ENCODE measurements at regions of chr17 and their contacts with region 1.

Region 1: DNA sequence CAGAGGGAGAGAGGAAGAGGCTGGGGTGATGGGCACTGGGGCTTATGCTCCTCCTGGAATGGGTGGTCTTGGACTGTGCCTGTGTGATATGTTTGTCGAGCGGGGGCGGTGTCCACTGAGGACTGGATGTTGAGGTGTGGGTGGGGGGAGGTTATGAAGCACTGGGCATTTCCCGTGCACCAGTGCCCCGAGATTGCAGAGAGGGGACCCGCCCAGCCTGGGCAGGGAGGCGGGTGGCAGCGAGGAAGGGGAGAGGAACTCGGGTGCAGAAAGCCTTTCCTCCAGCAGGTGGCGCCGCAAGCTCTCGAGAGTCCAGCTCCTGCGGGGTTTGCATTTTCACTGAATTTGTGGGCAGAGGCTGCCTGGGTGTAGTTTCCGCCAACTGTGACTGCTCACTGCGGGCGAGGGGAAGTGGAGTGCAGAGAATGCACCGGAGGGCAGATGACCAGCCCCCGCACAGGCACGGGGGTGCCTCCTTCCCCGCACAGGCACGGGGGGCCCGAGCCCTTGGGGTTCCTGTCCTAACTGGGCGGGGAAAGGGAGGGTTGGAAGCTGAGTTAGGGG is 190.6 kb downstream of the SEC14L1 start:
- DNase-seq: peak; percentile 92
- H3K4me3 ChIP-seq: peak overlapping the region; percentile 52
- H3K27ac ChIP-seq: peak overlapping the region; percentile 68
- H3K4me1 ChIP-seq: peaks cover 18% of the 10 kb centered on the region
- H3K27me3 ChIP-seq: no peaks in the 10 kb centered on the region
- CTCF ChIP-seq: peak; percentile 98

Region 2: GRCh38 chr17:77235370-77235941 is 95.9 kb before region 1 on chr17:
- intact Hi-C with region 1: no loop called
- DNase-seq: peak; percentile 45
- H3K4me3 ChIP-seq: peak overlapping the region; percentile 49
- H3K27ac ChIP-seq: peak overlapping the region; percentile 76
- H3K4me1 ChIP-seq: peaks cover 26% of the 10 kb centered on the region
- H3K27me3 ChIP-seq: no peaks in the 10 kb centered on the region
- CTCF ChIP-seq: no peak

Region 3: DNA sequence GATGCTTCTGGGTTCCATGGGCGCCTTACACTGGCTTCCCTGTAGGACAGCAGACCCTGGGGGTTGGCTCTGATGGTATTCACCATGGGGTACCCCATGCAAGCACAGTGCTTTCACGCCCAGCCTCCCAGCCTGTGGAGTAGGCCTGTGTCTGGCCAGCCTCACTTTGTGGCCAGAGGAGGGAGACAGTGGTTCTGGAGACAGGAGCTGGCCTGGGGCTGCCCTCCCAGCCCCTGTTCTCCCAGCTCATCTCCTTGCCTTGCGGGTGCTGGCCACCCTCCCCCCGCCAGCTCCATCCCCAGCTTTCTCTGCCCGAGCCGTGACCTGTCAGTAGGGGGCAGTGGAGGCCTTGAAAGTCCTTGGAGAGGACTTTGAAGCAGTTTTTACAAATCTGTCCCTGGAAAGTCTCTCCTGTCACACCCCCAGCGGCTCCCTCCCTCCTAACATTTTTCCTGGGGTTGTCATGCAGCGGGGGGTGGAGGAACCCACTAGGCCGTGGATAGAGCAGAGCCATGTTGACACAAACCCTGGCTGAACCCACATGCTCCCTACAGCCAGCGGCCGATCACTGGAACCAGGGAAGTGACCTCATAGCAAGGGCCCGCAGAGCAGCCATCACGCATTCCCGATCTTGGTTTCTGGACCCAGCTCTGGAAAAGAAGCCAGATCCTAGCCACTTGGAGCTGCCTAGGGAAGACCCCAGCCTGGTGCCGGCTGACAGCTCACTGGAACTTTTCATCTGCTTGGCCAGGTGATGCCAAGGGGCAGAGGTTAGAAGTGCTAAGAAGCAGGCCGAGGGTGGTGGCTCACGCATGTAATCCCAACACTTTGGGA is 98.8 kb after region 1 on chr17:
- intact Hi-C with region 1: loop called (anchors 10 kb)
- DNase-seq: peak; percentile 91
- H3K4me3 ChIP-seq: no peak overlapping the region
- H3K27ac ChIP-seq: peak overlapping the region; percentile 85
- H3K4me1 ChIP-seq: peaks cover 98% of the 10 kb centered on the region
- H3K27me3 ChIP-seq: no peaks in the 10 kb centered on the region
- CTCF ChIP-seq: peak; percentile 86

Region 4: GRCh38 chr17:77494664-77495435 is 163.5 kb after region 1 on chr17:
- intact Hi-C with region 1: loop called (anchors 5 kb)
- DNase-seq: peak; percentile 77
- H3K4me3 ChIP-seq: no peak overlapping the region
- H3K27ac ChIP-seq: peak overlapping the region; percentile 21
- H3K4me1 ChIP-seq: peaks cover 25% of the 10 kb centered on the region
- H3K27me3 ChIP-seq: no peaks in the 10 kb centered on the region
- CTCF ChIP-seq: peak; percentile 99

Measured in left ventricle myocardium inferior (tissue), 1 donor.